Activated T-helper 2 cell treated with anti-CD3 and anti-CD28 coated beads, Interferon-gamma antibody, Interleukin-2, Interleukin-4, amounts not matched to agents 10 μg/mL and 5 μg/mL and 100 μg/mL, durations not matched to agents 14 hours and 24 hours and 36 hours (primary cell): ENCODE measurements at regions of chrX and their contacts with region 1.

Region 1: GRCh38 chrX:12984629-12985319 is 9.9 kb downstream of the TMSB4X start:
- DNase-seq: peak; percentile 56
- H3K4me3 Mint-ChIP-seq: peak overlapping the region; percentile 49
- H3K27ac Mint-ChIP-seq: peak overlapping the region; percentile 96
- H3K4me1 Mint-ChIP-seq: peaks cover 56% of the 10 kb centered on the region
- H3K27me3 Mint-ChIP-seq: no peaks in the 10 kb centered on the region

Region 2: GRCh38 chrX:13000301-13000811 is 15.6 kb after region 1 on chrX:
- intact Hi-C with region 1: loop called (anchors 1 kb)
- DNase-seq: no peak
- H3K4me3 Mint-ChIP-seq: peak overlapping the region; percentile 66
- H3K27ac Mint-ChIP-seq: peak overlapping the region; percentile 98
- H3K4me1 Mint-ChIP-seq: peaks cover 62% of the 10 kb centered on the region
- H3K27me3 Mint-ChIP-seq: no peaks in the 10 kb centered on the region